PC-9 (cell line): ENCODE measurements at regions of chr15 and their contacts with region 1.

Region 1: GRCh38 chr15:75042730-75043508 is 19.5 kb downstream of the PPCDC start:
- DNase-seq: peak; percentile 93 to 99
- H3K4me3 ChIP-seq: no peak overlapping the region; the same call in 1 of the 2 replicates
- H3K27ac ChIP-seq: peak overlapping the region; percentile 99
- H3K4me1 ChIP-seq: peaks cover 82% of the 10 kb centered on the region
- H3K27me3 ChIP-seq: no peaks in the 10 kb centered on the region
- CTCF ChIP-seq: peak; percentile 73

Region 2: DNA sequence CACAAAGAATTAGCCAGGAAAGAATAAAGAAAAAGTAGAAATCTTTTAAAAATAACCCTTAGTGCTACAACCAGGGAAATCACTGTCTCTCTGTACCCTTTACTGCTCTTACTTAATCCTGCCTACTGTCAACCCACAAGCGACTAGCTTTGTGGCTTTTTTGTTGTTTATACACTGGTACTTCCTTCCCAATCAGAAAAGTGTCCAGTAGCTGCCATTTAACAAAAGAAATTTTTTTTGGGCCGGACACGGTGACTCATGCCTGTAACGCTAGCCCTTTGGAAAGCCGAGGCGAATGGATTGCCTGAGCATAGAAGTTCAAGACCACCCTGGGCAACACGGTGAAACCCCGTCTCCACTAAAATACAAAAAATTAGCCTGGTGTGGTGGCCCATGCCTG is 122.5 kb before region 1 on chr15:
- CTCF ChIA-PET with region 1: no interaction called
- POLR2A ChIA-PET with region 1: no interaction called
- intact Hi-C with region 1: no loop called
- DNase-seq: no peak
- H3K4me3 ChIP-seq: no peak overlapping the region
- H3K27ac ChIP-seq: no peak overlapping the region
- H3K4me1 ChIP-seq: no peaks in the 10 kb centered on the region
- H3K27me3 ChIP-seq: no peaks in the 10 kb centered on the region
- CTCF ChIP-seq: no peak

Region 3: DNA sequence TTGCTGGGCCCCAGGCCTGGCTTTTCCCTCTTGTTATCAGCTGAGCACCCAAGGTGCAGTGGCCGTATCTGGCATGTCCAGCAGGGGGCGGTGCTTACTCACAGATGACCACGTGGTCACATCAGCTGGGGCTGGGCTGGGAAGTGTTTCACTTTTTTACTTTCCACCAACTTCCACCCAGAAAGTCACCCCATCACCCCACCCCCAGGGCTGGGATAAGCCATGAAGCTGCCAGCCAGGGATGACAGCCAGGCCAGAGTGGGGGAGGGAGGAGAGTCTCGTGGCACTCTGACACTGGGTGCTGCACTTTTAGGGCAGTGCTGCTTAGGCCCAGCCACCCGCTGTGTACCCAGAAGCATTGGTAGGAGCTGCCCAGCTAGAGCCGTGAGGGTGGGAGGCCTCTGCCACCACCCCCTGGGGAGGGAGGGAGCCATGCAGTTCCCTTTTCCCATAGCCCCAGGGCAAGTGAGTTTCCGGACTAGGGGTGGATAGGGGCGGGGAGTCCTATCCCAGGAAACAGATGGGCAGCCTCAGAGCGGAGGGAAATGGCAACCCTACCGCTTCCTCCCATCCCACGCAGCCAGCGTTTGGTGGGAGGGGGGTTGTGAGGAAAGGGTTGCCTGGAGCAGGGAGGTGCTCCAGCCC is 13.4 kb before region 1 on chr15:
- CTCF ChIA-PET with region 1: no interaction called
- POLR2A ChIA-PET with region 1: interaction called, 8 read pairs
- intact Hi-C with region 1: loop called (anchors 2 kb)
- DNase-seq: peak; percentile 72 to 87
- H3K4me3 ChIP-seq: no peak overlapping the region
- H3K27ac ChIP-seq: peak overlapping the region; percentile 19; the same call in 1 of the 2 replicates
- H3K4me1 ChIP-seq: peaks cover 38% of the 10 kb centered on the region
- H3K27me3 ChIP-seq: no peaks in the 10 kb centered on the region
- CTCF ChIP-seq: peak; percentile 94

Region 4: DNA sequence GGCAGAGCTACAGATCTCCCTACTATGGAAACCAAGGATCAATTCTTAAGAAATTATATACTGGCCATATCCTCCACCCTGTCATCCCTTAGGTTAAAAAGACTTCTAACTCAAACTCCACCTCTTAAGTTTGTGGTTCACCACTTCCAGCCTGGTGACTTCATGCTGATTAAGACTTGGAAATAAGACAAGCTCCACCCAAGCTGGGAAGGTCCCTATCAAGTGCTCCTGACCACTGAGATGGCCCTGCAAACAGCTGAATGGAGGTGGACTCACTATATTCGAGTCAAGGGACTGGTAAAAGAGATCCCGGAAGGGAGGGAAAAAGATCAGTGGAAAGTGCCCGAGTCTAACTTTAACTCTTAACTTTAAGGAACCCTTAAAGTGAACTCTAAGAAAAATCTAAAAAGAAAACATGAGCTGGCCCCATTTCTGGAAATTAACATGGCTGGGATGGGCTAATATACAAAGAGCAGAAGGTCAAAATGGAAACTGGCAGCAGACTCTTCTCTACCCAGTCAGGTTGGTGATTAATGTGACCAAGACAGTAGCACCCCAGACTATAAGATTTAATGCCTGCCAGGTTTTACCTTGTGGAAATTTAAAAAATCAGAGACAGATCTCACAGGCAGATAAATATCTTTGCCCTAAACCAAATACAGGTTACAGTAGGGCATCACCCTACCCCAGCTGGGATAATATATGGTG is 24.4 kb after region 1 on chr15:
- CTCF ChIA-PET with region 1: interaction called, 12 read pairs
- POLR2A ChIA-PET with region 1: interaction called, 3 read pairs
- intact Hi-C with region 1: loop called (anchors 2 kb)
- DNase-seq: peak; percentile 44 to 77
- H3K4me3 ChIP-seq: no peak overlapping the region
- H3K27ac ChIP-seq: peak overlapping the region; percentile 86
- H3K4me1 ChIP-seq: peaks cover 38% of the 10 kb centered on the region
- H3K27me3 ChIP-seq: no peaks in the 10 kb centered on the region
- CTCF ChIP-seq: no peak

Region 5: GRCh38 chr15:75104804-75105535 is 62.1 kb after region 1 on chr15:
- CTCF ChIA-PET with region 1: interaction called, 7 read pairs
- POLR2A ChIA-PET with region 1: interaction called, 7 read pairs
- intact Hi-C with region 1: loop called (anchors 1 kb)
- DNase-seq: peak; percentile 87 to 98
- H3K4me3 ChIP-seq: no peak overlapping the region
- H3K27ac ChIP-seq: peak overlapping the region; percentile 99
- H3K4me1 ChIP-seq: peaks cover 62% of the 10 kb centered on the region
- H3K27me3 ChIP-seq: no peaks in the 10 kb centered on the region
- CTCF ChIP-seq: no peak

Region 6: DNA sequence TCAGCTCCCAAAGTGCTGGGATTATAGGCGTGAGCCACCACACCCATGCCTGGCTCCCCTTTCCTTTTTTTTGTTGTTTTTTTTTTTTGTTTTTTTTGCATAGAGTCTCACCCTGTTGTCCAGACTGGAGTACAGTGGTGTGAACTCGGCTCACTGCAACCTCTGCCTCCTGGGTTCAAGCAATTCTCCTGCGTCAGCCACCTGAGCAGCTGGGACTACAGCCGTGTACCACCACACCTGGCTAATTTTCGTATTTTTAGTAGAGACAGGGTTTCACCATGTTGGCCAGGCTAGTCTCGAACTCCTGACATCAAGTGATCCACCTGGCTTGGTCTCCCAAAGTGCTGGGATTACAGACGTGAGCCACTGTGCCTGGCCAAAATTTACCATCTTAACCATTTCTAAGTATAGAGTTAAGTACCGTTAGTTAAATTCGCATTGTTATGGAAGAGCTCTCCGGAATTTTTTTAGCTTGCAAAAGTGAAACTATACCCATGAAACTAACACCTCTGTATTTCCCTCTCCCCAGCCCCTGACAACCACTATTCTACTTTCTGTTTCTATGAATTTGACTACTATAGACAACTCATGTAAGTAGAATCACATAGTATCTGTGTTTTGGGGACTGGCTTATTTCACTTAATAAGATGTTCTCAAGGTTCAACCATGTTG is 87.8 kb after region 1 on chr15:
- CTCF ChIA-PET with region 1: no interaction called
- POLR2A ChIA-PET with region 1: no interaction called
- intact Hi-C with region 1: no loop called
- DNase-seq: no peak
- H3K4me3 ChIP-seq: no peak overlapping the region
- H3K27ac ChIP-seq: no peak overlapping the region
- H3K4me1 ChIP-seq: peaks cover 17% of the 10 kb centered on the region
- H3K27me3 ChIP-seq: no peaks in the 10 kb centered on the region
- CTCF ChIP-seq: no peak

Region 7: DNA sequence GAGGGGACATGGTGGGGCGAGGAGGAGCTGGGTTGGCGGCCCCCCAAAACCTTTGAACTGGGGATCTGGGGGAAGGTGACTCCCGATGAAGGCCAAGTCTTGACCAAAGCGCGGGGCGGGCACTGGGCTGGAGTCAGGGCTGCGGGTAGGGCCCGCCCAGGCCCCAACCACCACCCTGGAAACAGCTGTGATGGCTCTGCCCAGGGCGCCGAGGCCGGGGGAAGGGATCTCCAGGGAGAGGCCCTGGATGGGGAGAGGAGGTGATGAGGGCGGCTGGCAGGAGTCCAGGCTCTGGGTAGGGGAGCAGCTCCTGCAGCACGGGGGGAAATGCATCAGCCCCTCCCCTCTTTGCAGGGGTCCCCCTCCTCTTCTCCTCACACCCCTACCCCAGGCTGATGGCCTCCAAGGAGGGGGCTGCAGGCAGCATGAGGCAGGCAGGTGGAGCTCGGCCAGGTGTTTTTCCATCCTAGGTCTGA is 152.9 kb after region 1 on chr15:
- CTCF ChIA-PET with region 1: interaction called, 23 read pairs
- POLR2A ChIA-PET with region 1: interaction called, 20 read pairs
- intact Hi-C with region 1: no loop called
- DNase-seq: no peak
- H3K4me3 ChIP-seq: no peak overlapping the region
- H3K27ac ChIP-seq: no peak overlapping the region
- H3K4me1 ChIP-seq: peaks cover 23% of the 10 kb centered on the region
- H3K27me3 ChIP-seq: no peaks in the 10 kb centered on the region
- CTCF ChIP-seq: no peak